ENCODE measurements at regions of chr2 and their contacts with region 1.

Region 1: GRCh38 chr2:59654705-59655104 is 898.7 kb downstream of the BCL11A start:
- DNase-seq: no peak
- H3K4me3 ChIP-seq: no peak overlapping the region
- CTCF ChIP-seq: no peak
- POLR2A ChIP-seq: no peak

Region 2: DNA sequence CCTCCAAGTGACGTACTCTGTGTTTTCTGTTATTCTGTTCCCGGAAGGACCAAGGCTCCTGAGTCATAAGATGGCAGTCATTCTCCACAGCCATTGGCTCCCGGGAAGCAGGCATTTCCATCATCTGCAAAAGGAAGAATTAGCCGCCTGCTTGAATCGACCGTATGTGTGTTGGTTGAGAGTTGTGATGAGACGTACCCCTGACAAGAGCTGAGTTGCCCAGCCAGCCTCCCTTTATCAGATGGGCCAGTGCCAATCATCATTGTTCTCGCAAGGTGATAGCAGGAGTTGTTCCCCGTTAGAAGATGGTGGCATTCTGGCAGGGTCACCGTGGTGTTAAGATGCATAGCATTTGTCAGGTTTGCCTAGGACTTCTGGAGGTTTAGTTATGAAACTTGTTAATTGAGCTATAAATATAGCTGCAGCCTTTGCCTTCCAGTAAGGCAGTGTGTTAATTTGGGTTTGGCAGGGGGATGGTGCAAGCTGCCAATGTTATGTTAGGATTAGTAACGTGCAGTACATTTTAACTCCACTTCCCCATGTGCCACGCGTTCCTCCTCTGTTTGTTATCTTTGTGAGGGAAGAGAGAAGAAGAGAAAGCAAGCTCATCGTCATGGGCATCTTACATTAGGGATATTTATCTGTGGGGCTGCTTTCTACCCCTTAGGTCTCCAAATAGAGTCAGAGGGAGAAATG is 760.9 kb before region 1 on chr2:
- intact Hi-C with region 1: loop called (anchors 5 kb)
- DNase-seq: no peak
- H3K4me3 ChIP-seq: no peak overlapping the region
- CTCF ChIP-seq: no peak
- POLR2A ChIP-seq: no peak

Region 3: DNA sequence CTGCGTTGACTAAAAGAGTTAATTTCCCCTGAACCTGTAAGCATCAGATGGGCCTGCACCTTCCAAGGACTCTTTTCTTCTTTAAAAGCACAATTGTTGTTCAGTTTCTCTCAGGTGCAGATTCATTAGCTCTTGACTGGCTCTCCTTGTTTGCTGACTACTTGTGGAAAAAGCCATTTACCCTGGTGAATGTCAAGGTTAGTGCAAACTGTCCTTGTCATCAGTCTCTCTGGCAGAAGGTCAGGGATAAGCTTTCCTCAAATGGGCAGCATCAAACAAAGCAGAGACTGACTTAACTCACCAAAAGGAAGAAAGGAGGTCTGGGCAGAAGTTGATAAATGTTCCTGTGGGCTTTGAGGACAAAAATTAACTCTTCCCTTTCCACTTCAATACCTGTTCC is 23.9 kb before region 1 on chr2:
- intact Hi-C with region 1: no loop called
- DNase-seq: no peak
- H3K4me3 ChIP-seq: no peak overlapping the region
- CTCF ChIP-seq: no peak
- POLR2A ChIP-seq: no peak

Region 4: GRCh38 chr2:59932341-59932740 is 277.6 kb after region 1 on chr2:
- intact Hi-C with region 1: no loop called
- DNase-seq: no peak
- H3K4me3 ChIP-seq: no peak overlapping the region
- CTCF ChIP-seq: no peak
- POLR2A ChIP-seq: no peak

Region 5: GRCh38 chr2:60366135-60366712 is 711.5 kb after region 1 on chr2:
- intact Hi-C with region 1: no loop called
- DNase-seq: peak in 1 of 2 donors; percentile 65
- H3K4me3 ChIP-seq: no peak overlapping the region
- CTCF ChIP-seq: no peak
- POLR2A ChIP-seq: no peak